Activated T-helper 1 cell treated with anti-CD3 and anti-CD28 coated beads, Interleukin-12 subunit alpha, Interleukin-12 subunit beta, Interleukin-2, Interleukin-4 antibody, amounts not matched to agents 30 ng/mL and 10 ng/mL and 1 ng/mL, durations not matched to agents 14 hours and 24 hours and 36 hours (primary cell): ENCODE measurements at regions of chr15 and their contacts with region 1.

Region 1: DNA sequence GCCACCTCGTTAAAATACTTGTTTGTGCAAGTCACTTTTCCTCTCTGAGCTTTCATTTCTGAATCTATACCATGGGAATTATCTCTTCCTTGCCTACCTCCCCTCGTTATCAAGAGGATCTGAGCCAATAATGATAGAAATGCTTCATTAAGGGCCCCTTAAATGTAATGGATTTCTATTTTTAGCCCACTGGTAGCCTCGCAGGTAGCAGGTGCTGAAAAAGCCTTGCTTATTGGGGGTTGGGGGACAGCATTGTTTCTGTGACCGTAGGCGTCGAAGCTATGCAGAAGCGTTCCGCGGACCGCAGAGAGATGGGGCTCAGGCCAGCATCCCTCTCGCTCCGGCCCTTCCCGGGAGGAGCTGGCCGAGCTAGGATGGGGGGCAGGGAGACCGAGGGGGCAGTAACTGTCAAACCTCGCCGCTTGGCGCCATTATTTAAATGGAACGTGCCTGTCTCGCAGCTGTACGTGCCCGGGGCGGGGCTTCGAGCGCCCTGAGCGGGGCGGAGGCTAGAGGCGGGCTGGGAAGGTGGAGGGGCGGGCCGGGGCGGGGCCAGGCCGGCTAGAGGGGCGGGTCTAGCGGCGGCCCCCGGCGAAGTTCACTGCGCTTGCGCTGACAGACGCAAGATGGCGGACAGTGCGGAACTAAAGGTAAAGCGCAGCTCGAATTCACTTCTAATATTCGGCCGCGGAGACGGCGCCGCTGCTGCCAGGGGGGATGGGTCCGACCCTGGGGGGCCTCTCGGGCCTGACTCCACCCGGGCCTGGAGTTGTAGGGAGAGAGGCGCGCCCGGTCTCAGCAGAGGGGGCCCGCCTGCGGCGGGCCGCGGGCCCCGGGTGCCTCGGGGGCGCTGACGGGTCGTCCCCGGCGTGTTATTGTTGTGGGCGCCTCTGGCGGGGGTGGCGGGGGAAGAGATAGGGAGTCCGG is at the start of gene PIAS1:
- DNase-seq: peak; percentile 90
- H3K4me3 Mint-ChIP-seq: peak within 1 kb of the TSS; percentile 96
- H3K27ac Mint-ChIP-seq: peak within 1 kb of the TSS; percentile 94
- H3K4me1 Mint-ChIP-seq: peaks cover 50% of the 10 kb centered on the region
- H3K27me3 Mint-ChIP-seq: no peaks in the 10 kb centered on the region
- total RNA-seq, gene PIAS1: 26.4 and 26.8 TPM in 2 replicates

Region 2: GRCh38 chr15:66700802-66701421 is 1353.1 kb before region 1 on chr15:
- intact Hi-C with region 1: loop called (anchors 5 kb)
- DNase-seq: peak; percentile 85
- H3K4me3 Mint-ChIP-seq: peak overlapping the region; percentile 85
- H3K27ac Mint-ChIP-seq: peak overlapping the region; percentile 61
- H3K4me1 Mint-ChIP-seq: peaks cover 16% of the 10 kb centered on the region
- H3K27me3 Mint-ChIP-seq: peaks cover 21% of the 10 kb centered on the region

Region 3: GRCh38 chr15:67521029-67521811 is 532.7 kb before region 1 on chr15 and contains the start of gene C15orf61:
- intact Hi-C with region 1: loop called (anchors 10 kb)
- DNase-seq: peak; percentile 84
- H3K4me3 Mint-ChIP-seq: peak within 1 kb of the TSS; percentile 95
- H3K27ac Mint-ChIP-seq: peak within 1 kb of the TSS; percentile 98
- H3K4me1 Mint-ChIP-seq: peaks cover 25% of the 10 kb centered on the region
- H3K27me3 Mint-ChIP-seq: no peaks in the 10 kb centered on the region
- total RNA-seq, gene C15orf61: 6.6 and 6.9 TPM in 2 replicates

Region 4: GRCh38 chr15:68154923-68155559 is 101.1 kb after region 1 on chr15:
- intact Hi-C with region 1: loop called (anchors 5 kb)
- DNase-seq: no peak
- H3K4me3 Mint-ChIP-seq: no peak overlapping the region
- H3K27ac Mint-ChIP-seq: no peak overlapping the region
- H3K4me1 Mint-ChIP-seq: peaks cover 7% of the 10 kb centered on the region
- H3K27me3 Mint-ChIP-seq: no peaks in the 10 kb centered on the region

Region 5: DNA sequence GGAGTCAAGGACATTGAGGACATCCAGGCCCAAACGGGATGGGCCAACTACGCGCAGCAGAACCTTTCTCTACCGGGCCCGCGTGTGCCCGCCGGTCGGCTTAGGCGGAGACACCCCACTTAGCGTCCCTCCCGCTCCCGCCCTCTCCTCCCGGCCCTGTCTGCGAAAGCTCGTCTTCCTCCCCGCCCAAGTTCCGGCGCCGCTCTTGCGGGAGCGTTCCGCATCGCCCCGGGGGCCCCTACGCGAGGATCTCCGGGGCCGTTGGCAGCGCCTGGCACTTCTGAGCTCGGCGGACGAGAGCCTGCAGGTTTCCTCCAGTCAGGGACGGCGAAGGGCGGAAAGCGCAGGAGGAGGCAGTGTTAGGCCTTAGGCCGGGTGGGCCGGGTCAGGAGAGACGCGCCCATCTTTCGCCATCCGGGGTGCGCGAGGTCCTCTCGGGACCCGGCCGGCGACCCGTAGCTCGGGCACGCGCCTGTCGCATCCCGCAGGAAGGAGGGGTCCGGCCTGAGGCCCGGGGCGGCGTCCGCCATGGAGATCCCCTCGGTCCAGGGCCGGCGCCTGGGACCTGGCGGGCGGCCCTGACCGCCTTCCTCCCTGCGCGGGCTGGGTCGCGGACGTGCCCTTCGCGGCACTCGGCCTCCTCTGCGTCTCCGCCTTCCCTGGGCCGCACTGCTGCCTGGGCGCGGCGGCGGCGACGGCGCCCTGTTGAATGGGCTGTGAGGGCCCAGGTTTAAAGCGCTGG is 223.8 kb after region 1 on chr15 and contains the start of gene FEM1B:
- intact Hi-C with region 1: loop called (anchors 1 kb)
- DNase-seq: peak; percentile 85
- H3K4me3 Mint-ChIP-seq: peak within 1 kb of the TSS; percentile 100
- H3K27ac Mint-ChIP-seq: peak within 1 kb of the TSS; percentile 97
- H3K4me1 Mint-ChIP-seq: peaks cover 68% of the 10 kb centered on the region
- H3K27me3 Mint-ChIP-seq: no peaks in the 10 kb centered on the region
- total RNA-seq, gene FEM1B: 42.8 and 49.4 TPM in 2 replicates

Region 6: DNA sequence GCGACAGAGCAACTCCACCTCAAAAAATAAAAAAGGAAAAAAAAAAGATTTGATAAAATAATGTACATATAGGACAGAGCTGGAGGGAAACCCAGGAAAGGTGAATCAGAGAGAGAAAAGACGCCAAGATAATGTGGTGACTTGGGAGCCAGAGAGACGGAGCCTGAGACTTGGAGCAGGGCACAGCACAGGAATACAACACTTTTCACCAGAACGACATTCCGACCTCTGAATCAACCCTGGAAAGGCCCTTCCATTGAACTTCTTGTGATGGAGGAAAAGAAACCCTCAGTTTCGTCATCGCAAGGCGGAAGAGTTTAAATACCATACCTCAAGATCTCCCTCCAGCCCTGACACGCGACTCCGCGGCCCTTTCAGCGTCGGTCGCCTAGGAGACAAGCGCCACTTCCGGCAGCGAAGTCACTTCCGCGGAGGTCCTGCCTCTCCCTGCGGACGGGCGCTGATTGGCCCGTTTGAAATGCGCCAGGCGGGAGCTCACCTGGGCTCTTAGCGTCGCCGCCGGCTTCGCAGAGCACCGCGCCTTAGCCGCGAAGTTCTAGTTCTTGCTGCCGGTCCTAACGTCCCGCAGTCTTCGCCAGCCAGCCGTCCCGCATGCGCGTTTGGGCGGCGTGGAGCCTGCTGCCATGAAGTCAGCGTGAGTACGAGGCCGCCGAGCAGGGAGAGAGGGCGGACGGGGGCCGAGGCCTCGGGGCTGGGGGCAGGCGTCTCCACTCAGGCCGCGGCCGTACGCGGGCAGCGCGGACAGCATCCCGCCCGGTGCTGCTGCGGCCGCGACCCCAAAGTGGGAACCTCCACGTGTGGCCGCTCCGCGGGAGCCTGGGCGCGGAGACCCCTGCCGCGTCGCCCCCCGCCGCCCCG is 1360.1 kb after region 1 on chr15 and contains the start of gene KIF23:
- intact Hi-C with region 1: loop called (anchors 10 kb)
- DNase-seq: peak; percentile 91
- H3K4me3 Mint-ChIP-seq: peak within 1 kb of the TSS; percentile 89
- H3K27ac Mint-ChIP-seq: peak within 1 kb of the TSS; percentile 73
- H3K4me1 Mint-ChIP-seq: peaks cover 42% of the 10 kb centered on the region
- H3K27me3 Mint-ChIP-seq: peaks cover 2% of the 10 kb centered on the region
- total RNA-seq, gene KIF23: 40.8 and 41.6 TPM in 2 replicates